HEK293 (cell line): ENCODE measurements at regions of chr10 and their contacts with region 1.

Region 1: GRCh38 chr10:119725828-119726675 is at the start of gene INPP5F:
- H3K4me3 ChIP-seq: peak within 1 kb of the TSS; percentile 67
- H3K27ac ChIP-seq: peak within 1 kb of the TSS; percentile 85
- H3K4me1 ChIP-seq: peaks cover 16% of the 10 kb centered on the region
- CTCF ChIP-seq: no peak; the same call in 1 of the 2 replicates

Region 2: DNA sequence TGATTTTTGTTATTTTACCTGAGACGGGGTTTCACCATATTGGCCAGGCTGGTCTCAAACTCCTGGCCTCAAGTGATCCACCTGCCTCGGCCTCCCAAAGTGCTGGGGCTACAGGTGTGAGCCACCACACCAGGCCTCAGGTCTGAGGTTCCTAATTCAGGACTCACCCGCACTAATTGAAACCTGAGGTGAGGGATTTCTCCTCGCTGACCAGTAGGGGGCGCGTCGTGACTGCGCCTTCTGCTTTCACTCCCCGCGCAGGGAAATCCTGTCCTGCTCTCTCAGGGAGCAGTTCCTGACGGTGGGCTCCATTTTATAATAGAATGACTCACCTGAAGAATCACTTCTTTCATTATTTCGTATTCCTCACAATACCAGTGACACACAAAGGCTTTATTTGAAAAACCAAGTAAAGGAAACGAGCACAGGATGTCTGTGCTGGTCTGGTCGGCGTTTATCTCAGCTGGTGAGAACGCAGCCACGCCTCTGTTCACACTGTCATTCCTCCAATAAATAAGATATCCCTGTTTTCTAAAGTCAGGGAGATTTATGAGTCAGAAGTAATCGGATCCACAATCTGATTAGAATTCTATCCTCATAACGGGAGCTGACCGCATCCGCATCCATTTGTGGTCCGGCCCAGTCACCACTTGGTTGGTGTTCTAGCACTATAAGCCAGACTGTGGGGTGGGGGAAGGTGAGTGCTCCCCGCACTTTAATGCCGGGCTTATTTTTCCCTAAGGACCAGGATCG is 39.4 kb before region 1 on chr10:
- CTCF ChIA-PET with region 1: interaction called, 6 read pairs
- POLR2A ChIA-PET with region 1: interaction called, 12 read pairs
- H3K4me3 ChIP-seq: peak overlapping the region; percentile 12
- H3K27ac ChIP-seq: peak overlapping the region; percentile 51; the same call in 1 of the 2 replicates
- H3K4me1 ChIP-seq: no peaks in the 10 kb centered on the region
- CTCF ChIP-seq: peak; percentile 94

Region 3: DNA sequence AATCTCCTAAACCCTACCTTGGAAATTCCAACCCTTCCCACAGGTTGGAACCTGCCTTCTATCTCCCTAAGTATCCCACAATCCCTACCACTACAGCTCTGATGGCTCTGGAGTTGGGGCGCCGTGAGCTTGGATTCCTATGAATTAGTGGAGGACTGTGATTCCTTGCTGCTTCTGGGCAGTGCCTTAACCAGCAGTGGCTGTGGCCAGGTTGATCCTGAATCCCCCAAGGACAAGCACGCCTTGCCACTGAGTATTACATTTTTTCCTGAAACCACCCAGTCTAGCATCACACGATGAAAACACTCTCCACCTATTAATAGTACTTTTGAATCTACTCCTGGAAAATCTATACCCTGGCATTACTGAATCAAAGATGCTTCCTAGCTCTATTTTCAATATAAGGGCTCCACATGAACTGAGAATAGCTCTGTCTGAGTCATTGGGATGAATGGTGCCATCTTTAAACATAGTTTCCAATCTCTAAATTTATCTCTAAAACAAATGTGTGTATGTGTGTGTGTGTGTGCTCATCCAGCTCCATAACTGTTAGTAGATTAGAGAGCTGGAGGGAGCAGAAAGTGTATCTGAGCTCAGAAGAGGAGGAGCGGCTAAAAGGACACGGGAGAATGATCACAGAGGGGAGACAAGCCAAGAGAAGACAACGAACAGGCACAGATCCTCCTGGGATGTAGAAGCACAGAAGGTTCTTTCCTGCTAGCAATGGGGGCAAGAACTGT is 12.1 kb before region 1 on chr10:
- CTCF ChIA-PET with region 1: interaction called, 5 read pairs
- POLR2A ChIA-PET with region 1: interaction called, 10 read pairs
- H3K4me3 ChIP-seq: no peak overlapping the region
- H3K27ac ChIP-seq: no peak overlapping the region
- H3K4me1 ChIP-seq: no peaks in the 10 kb centered on the region
- CTCF ChIP-seq: no peak

Region 4: DNA sequence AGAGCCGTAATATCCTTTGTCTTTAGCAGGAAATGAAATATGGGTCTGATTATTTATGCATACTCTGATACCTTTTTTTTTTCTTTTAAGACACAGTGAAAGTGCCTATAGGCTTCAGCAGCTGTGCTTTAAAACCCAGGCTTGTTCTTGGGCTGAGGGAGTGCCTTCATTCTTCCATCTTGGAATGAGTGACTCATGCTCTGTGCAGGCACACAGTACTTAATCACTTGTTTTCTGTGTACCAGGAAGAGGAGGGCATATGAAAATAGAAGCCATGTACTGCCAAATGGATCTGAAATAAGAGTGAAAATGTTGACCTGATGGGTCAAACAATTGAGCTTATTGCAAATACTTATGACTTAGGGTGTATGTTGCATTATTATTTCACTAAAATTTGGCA is 11.8 kb after region 1 on chr10:
- CTCF ChIA-PET with region 1: no interaction called
- POLR2A ChIA-PET with region 1: interaction called, 20 read pairs
- H3K4me3 ChIP-seq: no peak overlapping the region
- H3K27ac ChIP-seq: no peak overlapping the region
- H3K4me1 ChIP-seq: peaks cover 32% of the 10 kb centered on the region
- CTCF ChIP-seq: no peak